Activated naive CD4-positive, alpha-beta T cell treated with anti-CD3 and anti-CD28 coated beads for 36 hours (primary cell): ENCODE measurements at regions of chr5 and their contacts with region 1.

Region 1: DNA sequence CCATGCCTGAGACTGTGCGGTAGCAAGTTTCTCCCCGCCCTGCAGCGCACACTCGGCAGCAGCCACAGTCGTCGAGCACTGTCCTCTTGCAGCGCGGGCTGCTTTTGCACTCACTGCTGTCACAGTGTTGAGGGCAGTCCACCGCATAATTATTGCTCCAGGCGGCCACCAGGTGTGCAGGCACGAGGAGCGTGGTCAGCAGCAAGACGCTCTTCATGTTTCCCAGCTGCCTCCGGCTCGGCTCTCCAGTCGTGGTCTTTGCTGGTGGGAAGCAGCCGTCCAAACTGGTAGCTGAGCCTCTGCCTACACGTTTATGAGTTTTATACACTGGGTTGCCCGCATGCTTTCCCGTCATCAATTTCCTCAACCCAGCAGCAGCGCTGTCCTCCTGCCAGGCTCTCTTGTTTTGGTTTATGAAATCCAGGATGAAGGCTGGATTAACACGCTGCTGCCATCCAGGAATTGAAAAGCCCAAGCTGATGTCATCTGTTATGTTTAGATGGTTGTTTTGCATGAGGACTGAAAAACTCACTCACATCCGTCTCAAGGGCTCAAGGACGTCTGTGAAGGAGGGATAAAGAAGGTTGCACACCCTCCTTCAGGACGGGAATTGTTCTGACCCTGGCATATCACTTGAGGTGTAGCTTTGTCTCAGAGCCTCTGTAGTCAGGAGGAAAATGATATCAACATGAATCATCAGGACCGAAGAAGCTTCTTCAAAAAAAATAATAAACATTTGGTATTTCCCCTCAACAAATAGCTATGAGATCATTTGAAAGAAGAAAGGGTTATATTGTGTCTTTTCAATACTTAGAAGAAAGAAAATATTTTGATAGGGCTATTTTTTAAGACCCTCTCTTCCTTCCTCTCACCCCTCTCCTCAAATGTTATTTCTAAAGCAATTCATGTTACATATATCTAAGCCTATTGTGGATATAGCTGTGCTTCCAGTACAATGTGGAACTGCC is at the start of gene ESM1:
- DNase-seq: no peak
- H3K4me3 Mint-ChIP-seq: no peak within 1 kb of the TSS
- H3K27ac Mint-ChIP-seq: no peak within 1 kb of the TSS
- H3K4me1 Mint-ChIP-seq: peaks cover 38% of the 10 kb centered on the region
- H3K27me3 Mint-ChIP-seq: peaks cover 5% of the 10 kb centered on the region
- total RNA-seq, gene ESM1: not detected

Region 2: DNA sequence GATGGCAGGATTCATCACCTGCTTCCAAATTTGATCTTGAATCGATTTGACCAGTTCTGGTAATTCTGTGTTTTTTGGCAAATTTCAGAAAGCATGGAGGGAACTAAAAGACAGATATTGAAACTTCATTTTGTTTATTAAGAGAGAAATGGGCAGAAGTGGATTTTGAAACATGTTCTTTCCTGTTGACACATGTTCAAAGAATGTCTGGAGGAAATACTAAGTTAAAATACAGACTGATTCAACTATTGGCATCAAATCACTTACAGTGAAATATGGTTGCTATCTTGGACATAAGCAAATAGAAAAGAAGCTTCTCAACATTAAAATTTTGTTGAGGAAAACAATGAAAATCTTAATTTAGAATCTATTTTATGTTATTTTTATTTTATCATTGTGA is 19.1 kb after region 1 on chr5:
- CTCF ChIA-PET with region 1: no interaction called
- intact Hi-C with region 1: loop called (anchors 1 kb)
- DNase-seq: no peak
- H3K4me3 Mint-ChIP-seq: no peak overlapping the region
- H3K27ac Mint-ChIP-seq: no peak overlapping the region
- H3K4me1 Mint-ChIP-seq: peaks cover 19% of the 10 kb centered on the region
- H3K27me3 Mint-ChIP-seq: no peaks in the 10 kb centered on the region

Region 3: GRCh38 chr5:55254802-55255201 is 269.2 kb after region 1 on chr5:
- CTCF ChIA-PET with region 1: no interaction called
- intact Hi-C with region 1: no loop called
- DNase-seq: no peak
- H3K4me3 Mint-ChIP-seq: no peak overlapping the region
- H3K27ac Mint-ChIP-seq: no peak overlapping the region
- H3K4me1 Mint-ChIP-seq: no peaks in the 10 kb centered on the region
- H3K27me3 Mint-ChIP-seq: no peaks in the 10 kb centered on the region